SK-N-SH (cell line): ENCODE measurements at regions of chr12 and their contacts with region 1.

Region 1: DNA sequence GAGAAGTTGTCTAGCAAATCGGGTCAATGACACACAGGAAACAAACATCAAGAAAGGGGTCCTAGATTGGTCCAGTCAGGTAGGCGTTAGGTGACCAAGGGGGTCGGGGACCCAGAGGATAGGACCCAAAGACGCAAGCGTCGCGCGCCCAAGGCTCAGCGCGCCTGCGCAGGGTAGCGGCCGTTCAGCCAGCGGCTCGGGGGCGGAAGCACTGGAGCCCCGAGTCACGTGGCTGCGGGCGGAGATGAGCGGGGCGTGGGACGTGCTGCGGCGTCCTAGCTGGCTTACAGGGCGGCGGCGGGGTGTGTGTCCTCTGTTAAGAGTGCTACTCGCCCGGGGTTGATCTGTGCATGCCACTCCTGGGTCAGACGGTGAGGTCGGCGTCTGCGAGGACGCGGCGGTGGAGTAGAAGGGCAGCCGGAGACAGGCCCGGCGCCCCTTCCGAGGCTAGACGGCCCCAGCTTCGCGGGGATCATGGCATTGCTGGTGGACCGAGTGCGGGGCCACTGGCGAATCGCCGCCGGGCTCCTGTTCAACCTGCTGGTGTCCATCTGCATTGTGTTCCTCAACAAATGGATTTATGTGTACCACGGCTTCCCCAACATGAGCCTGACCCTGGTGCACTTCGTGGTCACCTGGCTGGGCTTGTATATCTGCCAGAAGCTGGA is at the start of gene SLC35E3:
- DNase-seq: peak; percentile 96
- H3K4me3 ChIP-seq: peak within 1 kb of the TSS; percentile 73 to 92
- H3K27ac ChIP-seq: peak within 1 kb of the TSS; percentile 66 to 91
- H3K4me1 ChIP-seq: peaks cover 4 to 12% of the 10 kb centered on the region in 2 experiments; a peak in 3 of 4 replicates
- H3K27me3 ChIP-seq: no peaks in the 10 kb centered on the region
- CTCF ChIP-seq: no peak
- EP300 ChIP-seq: no peak
- RAD21 ChIP-seq: no peak
- polyA plus RNA-seq, gene SLC35E3: 5.7 and 6.8 TPM in 2 replicates

Region 2: DNA sequence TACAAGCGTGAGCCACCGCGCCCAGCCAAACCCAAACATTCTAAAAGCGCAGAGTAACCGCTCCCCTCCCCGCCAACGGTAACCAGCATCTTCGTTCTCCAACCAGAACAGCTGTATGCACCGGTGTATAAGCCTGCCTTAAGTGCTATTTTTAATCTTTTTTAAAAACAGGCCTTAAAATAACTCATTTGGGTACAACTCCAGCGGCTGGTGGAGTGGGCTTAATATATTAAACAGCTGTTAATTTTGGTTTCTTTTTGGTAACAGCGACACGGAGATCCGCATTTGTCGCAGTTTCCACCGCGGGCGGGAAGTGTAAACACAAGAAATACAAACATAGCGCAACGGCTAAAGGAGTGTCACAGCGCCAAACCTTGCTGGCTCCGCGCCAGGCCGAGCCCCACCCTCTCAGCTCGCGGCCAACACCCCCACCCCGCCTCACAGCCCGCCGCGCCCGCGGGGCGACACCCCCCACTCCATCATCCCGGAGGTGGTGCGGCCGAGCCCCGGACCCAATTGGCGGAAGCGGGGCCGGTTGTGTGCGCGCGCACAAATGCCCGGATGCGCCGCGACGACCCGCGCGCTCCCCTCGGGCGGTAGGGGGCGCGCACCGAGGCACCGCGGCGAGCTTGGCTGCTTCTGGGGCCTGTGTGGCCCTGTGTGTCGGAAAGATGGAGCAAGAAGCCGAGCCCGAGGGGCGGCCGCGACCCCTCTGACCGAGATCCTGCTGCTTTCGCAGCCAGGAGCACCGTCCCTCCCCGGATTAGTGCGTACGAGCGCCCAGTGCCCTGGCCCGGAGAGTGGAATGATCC is 61.7 kb after region 1 on chr12 and contains the start of gene MDM2:
- CTCF ChIA-PET with region 1: interaction called, 3 read pairs
- POLR2A ChIA-PET with region 1: interaction called, 21 read pairs
- DNase-seq: peak; percentile 99
- H3K4me3 ChIP-seq: peak within 1 kb of the TSS; percentile 82 to 99
- H3K27ac ChIP-seq: peak within 1 kb of the TSS; percentile 96 to 98
- H3K4me1 ChIP-seq: peaks cover 0 to 2% of the 10 kb centered on the region in 2 experiments; a peak in 3 of 4 replicates
- H3K27me3 ChIP-seq: no peaks in the 10 kb centered on the region
- CTCF ChIP-seq: peak; percentile 68
- EP300 ChIP-seq: no peak
- RAD21 ChIP-seq: no peak
- polyA plus RNA-seq, gene MDM2: 16.9 and 21.5 TPM in 2 replicates